Dorsolateral prefrontal cortex (tissue), 120 donors: ENCODE measurements at regions of chr5 and their contacts with region 1.

Region 1: DNA sequence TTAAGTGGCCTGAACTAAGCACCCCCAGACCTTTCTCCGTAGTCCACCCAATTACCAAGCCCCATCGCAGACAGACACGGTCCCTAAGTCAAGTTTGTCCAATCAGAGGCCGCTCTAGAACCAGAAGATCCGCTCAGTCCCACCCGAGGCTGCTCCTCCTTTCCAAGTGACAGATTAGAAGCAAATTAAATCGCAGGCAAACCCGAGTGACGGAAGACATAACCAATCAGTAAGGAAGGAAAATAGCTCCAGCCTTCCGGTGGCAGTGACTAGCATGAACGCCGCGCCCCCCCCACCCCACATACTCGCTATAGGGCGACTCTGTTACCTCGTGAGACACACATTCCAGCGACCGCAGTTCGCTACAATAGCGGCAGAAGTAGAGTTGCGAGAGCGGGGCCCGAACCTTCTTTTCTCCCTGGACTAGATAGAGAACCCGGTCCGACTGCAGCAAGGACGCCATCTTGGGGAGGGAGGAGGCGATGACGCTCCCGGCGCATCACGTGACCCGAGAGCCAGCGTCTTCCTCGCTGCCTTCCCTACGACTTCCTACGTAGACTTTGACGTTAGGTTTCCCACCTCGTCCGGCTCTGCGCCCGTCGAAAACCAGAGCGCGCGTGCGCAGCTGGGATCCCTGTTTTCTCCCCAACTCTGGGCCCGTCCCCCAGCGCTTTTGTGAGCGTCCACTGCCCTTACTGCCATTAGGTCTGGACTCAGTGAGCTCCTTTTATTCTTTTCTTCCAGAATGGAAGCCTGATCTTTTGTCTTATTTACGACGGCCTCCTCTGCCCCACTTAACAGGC is at the start of gene DCTN4:
- DNase-seq: peak; percentile 96 to 99 (median 97)
- H3K4me3 ChIP-seq: peak within 1 kb of the TSS; percentile 61 to 96 (median 79)
- H3K27ac ChIP-seq: peak within 1 kb of the TSS; percentile 92 to 100 (median 99)
- H3K27me3 ChIP-seq: no peaks in the 10 kb centered on the region
- CTCF ChIP-seq: peak in 26 of 56 donors; percentile 7 to 60 (median 24)
- total RNA-seq, gene DCTN4: 75.7 to 114 (median 94.9) TPM

Region 2: DNA sequence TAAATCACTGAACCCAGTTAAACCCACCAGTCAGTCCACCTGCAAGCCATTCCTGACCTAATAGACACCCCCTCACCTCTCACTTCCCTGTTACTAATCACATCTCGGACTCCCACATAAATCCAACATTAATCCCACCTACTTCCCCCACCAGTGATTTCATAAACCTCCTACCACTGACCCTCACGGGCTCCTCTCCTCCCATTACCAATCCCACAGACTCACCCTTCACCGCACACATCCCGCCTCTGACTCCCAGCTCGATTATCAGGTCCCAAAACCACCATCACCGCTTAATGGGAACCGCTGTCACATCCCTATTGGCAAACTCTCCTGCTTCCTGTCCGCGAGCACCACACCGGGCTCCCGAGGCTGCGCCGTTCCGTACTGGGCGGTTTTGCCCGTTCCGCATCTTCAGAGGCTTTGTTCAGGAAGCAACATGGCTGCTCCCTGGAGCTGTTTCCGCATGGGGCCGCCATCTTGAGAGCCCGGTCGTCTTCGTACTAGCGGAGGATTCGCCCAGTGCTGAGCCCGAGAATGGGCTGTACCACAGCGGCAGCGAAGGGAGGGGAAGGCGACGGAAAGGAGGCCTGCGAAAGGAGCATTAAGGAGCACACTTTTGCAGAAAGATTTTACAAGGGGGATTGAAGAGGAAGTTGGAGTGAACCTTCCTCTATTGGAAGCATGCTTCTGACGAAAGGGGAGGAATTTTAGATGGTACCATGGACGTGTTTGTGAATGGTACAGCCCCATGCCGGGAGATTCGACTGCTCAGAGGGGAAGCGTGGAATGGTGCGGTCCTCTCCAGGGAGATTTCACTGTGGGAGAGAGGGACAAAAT is 146.0 kb after region 1 on chr5 and contains the start of gene ZNF300:
- intact Hi-C with region 1: loop called (anchors 5 to 10 kb)
- DNase-seq: peak; percentile 79 to 94 (median 90)
- H3K4me3 ChIP-seq: peak within 1 kb of the TSS; percentile 33 to 79 (median 61)
- H3K27ac ChIP-seq: peak within 1 kb of the TSS in 57 of 59 donors; percentile 14 to 95 (median 85)
- H3K27me3 ChIP-seq: no peaks in the 10 kb centered on the region
- CTCF ChIP-seq: peak in 23 of 56 donors; percentile 10 to 48 (median 25)
- total RNA-seq, gene ZNF300: 0.96 to 7.3 (median 2.6) TPM